Transverse colon (tissue), 4 donors: ENCODE measurements at regions of chr18 and their contacts with region 1.

Region 1: GRCh38 chr18:13530879-13531387 is 195.4 kb downstream of the FAM210A start:
- DNase-seq: peak; percentile 62
- H3K4me3 ChIP-seq: no peak overlapping the region
- H3K27ac ChIP-seq: no peak overlapping the region
- H3K4me1 ChIP-seq: no peaks in the 10 kb centered on the region
- H3K27me3 ChIP-seq: no peaks in the 10 kb centered on the region
- CTCF ChIP-seq: peak; percentile 41 to 49 (median 48)
- EP300 ChIP-seq: no peak
- POLR2A ChIP-seq: no peak

Region 2: DNA sequence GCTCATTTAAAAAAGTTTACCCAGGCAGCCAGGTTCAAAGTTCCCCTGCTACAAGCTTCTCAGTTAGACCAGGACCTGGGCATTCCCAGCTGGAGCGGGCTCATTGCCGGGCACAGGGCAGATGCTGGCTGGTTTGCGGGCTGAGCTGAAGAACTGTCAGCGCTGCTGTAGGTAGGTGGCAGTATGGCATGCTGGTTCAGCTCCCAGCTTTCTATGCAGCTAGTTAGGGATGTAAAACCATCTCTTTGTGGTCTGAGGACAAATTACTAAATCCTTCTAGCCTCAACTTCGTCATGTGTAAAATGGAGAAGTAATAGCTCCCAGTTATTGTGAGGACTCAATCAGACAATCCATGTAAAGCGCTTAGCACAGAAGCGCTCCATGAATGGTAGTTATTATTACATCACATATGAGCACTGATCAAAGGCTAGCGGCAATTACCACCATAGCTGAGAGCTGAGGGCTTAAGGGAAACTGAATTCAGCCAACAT is 314.8 kb before region 1 on chr18:
- in situ Hi-C with region 1: loop called in 3 of 4 experiments (anchors 25 kb)
- intact Hi-C with region 1: loop called (anchors 2 kb)
- DNase-seq: peak; percentile 90
- H3K4me3 ChIP-seq: no peak overlapping the region
- H3K27ac ChIP-seq: peak overlapping the region; percentile 90 to 92 (median 91)
- H3K4me1 ChIP-seq: peaks cover 19 to 45% (median 30%) of the 10 kb centered on the region in 4 donors
- H3K27me3 ChIP-seq: no peaks in the 10 kb centered on the region
- CTCF ChIP-seq: peak; percentile 56 to 87 (median 64)
- EP300 ChIP-seq: no peak
- POLR2A ChIP-seq: peak; percentile 28

Region 3: DNA sequence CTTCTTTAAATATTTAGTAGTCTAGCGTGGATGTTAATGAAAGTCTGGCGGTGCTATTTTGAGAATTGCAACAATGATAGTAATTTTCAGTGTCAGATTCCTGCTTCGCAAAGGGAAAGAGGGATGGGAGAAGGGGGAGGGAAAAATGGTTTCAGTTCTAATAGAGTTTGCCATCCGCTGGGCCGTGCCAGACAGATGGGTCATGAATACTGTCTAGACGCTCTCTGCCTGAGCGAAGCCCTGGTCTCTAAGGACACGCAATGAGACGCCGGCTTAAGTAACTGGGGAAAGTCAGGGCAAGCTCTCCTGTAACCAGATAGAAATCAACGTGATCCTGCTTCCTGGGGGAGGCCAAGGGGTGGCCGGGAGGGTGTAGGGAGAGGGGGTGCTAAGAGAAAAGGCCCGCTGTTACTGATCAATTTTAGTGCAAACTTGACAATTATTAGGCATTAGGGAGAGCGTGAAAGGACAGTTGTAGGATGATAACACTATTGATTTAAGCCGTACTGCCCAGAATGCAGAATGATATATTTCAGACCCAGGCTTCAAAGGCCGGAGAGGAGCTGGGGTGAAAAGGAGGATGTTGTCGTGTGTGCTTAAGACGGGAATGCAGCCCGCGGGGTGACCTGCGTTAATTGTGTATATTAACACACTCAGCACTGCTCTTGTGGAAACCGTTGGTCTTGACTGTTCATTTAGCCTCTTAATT is 83.2 kb before region 1 on chr18:
- in situ Hi-C with region 1: loop called in 1 of 4 experiments (anchors 25 kb)
- intact Hi-C with region 1: no loop called
- DNase-seq: no peak
- H3K4me3 ChIP-seq: peak overlapping the region in 1 of 4 donors; percentile 16
- H3K27ac ChIP-seq: peak overlapping the region in 1 of 4 donors; percentile 48
- H3K4me1 ChIP-seq: peaks cover 0 to 21% (median 8%) of the 10 kb centered on the region in 4 donors
- H3K27me3 ChIP-seq: no peaks in the 10 kb centered on the region
- CTCF ChIP-seq: no peak
- EP300 ChIP-seq: no peak
- POLR2A ChIP-seq: no peak

Region 4: DNA sequence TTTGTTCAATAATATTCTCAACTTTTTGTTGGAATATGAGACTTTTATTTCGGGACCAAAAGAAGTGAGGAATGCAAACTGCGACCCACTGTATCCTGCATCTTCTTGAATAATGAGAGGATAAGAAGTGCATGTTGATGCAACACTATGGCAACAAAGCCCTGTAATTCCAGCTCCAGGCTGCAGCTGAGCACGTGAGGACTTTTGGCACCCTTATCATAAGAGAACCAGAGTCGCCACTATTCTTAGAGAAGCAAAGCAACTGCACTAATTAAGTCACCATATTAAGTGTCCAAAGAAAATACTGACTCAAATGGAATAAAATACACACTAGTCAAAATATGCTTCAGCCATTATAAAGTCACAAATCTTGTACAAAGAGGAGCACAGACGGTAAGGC is 129.6 kb after region 1 on chr18:
- in situ Hi-C with region 1: no loop called
- intact Hi-C with region 1: no loop called
- DNase-seq: no peak
- H3K4me3 ChIP-seq: no peak overlapping the region
- H3K27ac ChIP-seq: no peak overlapping the region
- H3K4me1 ChIP-seq: no peaks in the 10 kb centered on the region
- H3K27me3 ChIP-seq: no peaks in the 10 kb centered on the region
- CTCF ChIP-seq: no peak
- EP300 ChIP-seq: no peak
- POLR2A ChIP-seq: no peak